ENCODE measurements at regions of chr9 and their contacts with region 1.

Region 1: DNA sequence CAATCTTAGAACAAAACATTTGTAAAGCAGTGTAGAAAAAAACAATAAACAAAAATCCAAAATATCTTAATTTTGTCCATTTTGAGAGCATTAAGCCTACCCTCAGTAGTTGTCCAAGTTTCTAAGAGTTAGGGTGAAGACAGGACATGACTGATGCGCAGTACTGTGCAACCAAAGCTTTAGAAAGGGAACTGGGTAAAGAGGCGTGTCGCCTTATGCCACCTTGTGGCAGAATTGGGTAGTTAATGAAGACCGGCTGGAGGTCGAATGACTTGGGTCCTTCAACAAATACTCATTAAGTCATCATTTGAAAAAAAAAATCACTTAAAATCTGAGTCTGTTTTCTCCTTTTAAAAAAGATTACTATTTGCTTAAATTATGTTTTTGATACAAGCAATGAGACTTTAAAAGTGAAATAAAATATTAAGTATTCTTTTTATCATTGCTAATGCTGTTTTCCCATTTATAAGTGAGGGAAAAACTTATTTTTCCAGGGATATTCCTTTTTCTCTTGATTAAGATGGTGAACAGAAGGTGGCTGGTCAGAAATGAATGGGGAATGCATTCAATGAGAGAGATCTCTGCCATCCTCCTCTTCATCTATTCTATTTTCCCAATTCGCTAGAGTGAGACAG is 3.5 kb upstream of the RNF20 start:
- DNase-seq: peak; percentile 84
- H3K4me3 ChIP-seq: no peak overlapping the region
- H3K27ac ChIP-seq: no peak overlapping the region
- H3K4me1 ChIP-seq: peaks cover 12% of the 10 kb centered on the region
- CTCF ChIP-seq: peak; percentile 96

Region 2: GRCh38 chr9:101398068-101398929 is 131.9 kb before region 1 on chr9 and contains the starts of genes MRPL50 and ZNF189:
- CTCF ChIA-PET with region 1: no interaction called
- POLR2A ChIA-PET with region 1: interaction called, 4 read pairs
- intact Hi-C with region 1: loop called (anchors 5 kb)
- DNase-seq: peak; percentile 97
- H3K4me3 ChIP-seq: peak within 1 kb of the TSS; percentile 95
- H3K27ac ChIP-seq: peak within 1 kb of the TSS; percentile 54
- H3K4me1 ChIP-seq: peaks cover 28% of the 10 kb centered on the region
- CTCF ChIP-seq: no peak
- total RNA-seq, gene MRPL50: 17.7 and 18.5 TPM in 2 replicates
- total RNA-seq, gene ZNF189: 11.0 and 11.7 TPM in 2 replicates

Region 3: DNA sequence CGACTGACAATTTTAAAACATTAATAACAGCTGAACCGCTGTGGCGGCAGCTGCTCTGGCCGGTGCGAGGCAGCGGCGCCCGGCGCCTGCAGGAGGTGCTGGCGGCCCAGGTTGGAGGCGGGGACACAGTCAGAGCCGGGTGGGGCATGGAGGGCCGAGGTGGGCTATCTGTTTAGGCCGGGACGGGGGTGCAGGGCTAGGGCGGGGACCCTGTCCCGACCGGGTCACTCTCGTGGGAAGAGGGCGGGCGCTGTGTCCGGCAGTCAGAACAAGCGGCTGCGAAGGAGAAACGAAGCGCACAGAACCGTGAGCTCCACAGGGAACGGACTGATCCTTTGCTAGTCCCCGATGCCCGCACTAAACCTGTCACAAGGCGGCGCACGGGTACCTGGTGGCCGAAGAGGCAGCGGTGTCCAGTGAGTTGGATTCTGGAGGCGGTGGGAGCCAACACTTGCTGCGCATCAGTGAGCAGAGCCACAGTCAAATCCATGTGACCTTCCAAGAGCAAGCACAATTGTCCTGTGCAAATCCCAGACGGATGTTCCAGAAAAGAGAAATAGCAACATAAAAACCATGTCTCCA is 81.0 kb before region 1 on chr9:
- CTCF ChIA-PET with region 1: interaction called, 5 read pairs
- POLR2A ChIA-PET with region 1: no interaction called
- intact Hi-C with region 1: loop called (anchors 1 kb)
- DNase-seq: peak; percentile 78
- H3K4me3 ChIP-seq: peak overlapping the region; percentile 69
- H3K27ac ChIP-seq: no peak overlapping the region
- H3K4me1 ChIP-seq: peaks cover 5% of the 10 kb centered on the region
- CTCF ChIP-seq: peak; percentile 87

Region 4: GRCh38 chr9:101458955-101459631 is 71.1 kb before region 1 on chr9:
- CTCF ChIA-PET with region 1: interaction called, 3 read pairs
- POLR2A ChIA-PET with region 1: no interaction called
- intact Hi-C with region 1: loop called (anchors 1 kb)
- DNase-seq: peak; percentile 66
- H3K4me3 ChIP-seq: no peak overlapping the region
- H3K27ac ChIP-seq: no peak overlapping the region
- H3K4me1 ChIP-seq: no peaks in the 10 kb centered on the region
- CTCF ChIP-seq: peak; percentile 79

Region 5: DNA sequence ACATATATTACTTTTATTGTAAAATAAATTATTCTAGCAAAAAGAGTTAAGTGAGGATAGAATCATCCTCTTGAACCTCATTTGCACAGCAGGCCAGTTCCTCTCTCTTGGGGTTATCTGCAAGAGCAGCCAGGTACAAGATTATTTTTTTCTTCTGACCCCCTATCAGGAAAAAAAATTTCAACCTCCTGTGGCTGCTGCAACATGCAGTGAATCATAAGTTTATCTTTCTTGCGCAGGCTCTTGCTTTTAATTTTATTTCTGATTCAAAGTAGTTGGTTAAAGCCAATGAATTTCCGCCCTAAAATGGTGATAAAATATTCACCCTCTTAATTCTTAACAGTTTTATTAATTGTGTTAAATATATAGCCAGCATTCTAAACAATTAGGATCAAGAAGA is 134.3 kb after region 1 on chr9:
- CTCF ChIA-PET with region 1: no interaction called
- POLR2A ChIA-PET with region 1: no interaction called
- intact Hi-C with region 1: no loop called
- DNase-seq: no peak
- H3K4me3 ChIP-seq: no peak overlapping the region
- H3K27ac ChIP-seq: no peak overlapping the region
- H3K4me1 ChIP-seq: no peaks in the 10 kb centered on the region
- CTCF ChIP-seq: no peak

Region 6: DNA sequence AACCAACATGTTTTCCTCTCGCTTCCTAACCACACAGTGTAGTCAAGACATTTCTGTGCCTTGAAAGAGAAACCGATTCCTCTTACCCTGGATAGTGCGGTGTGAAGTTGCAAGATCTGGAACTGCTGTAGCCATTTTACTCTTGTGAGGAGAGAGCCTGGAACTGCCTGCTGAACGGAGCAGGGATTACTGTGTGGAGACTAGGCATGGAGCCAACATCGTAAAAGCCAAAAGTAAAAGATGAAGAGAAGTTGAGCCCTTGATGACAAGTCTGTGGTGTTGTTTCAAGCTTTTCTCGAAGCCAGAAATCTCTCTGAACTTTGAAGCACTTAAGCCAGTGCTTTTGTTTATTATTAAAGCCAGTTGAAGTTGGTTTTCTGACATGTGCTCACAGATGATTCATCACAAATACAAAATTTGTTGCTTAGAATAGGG is 318.3 kb after region 1 on chr9:
- CTCF ChIA-PET with region 1: no interaction called
- POLR2A ChIA-PET with region 1: no interaction called
- intact Hi-C with region 1: no loop called
- DNase-seq: no peak
- H3K4me3 ChIP-seq: no peak overlapping the region
- H3K27ac ChIP-seq: no peak overlapping the region
- H3K4me1 ChIP-seq: no peaks in the 10 kb centered on the region
- CTCF ChIP-seq: no peak

Measured in OCI-LY7 (cell line).